ENCODE measurements at regions of chr18 and their contacts with region 1.

Region 1: DNA sequence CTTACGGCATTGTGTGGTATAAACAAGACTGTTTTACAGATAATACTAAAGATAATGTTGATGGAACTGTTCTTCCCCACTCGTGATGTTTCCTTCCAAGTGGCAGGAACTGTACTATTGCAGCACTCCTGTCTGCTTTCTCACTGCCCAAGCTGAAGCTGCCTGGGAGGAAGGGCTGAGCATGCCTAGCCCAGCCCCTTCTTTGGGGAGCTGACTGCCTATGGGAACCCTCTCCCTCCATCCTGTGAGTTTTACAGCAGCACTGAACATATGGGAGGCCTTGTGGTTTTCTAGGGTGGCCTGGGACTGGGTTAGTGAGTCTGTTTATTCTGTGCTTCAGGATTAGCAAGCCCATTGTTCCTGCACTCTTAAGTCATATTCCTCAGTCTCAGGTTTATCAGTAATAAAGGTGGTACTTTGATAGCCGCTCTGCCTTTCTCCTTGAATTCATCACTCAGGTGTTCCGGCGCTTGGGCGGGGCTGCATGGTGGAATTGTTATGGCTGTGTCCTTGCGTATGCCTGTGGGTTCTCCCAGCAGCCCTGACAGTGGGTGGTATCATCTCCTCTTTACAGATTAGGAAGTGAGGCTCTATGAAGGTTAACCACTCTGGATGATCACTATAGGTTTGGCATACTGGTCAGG is 379.7 kb downstream of the PTPRM start:
- DNase-seq: peak; percentile 76
- ATAC-seq: peak; percentile 55
- H3K4me3 ChIP-seq: peak overlapping the region; percentile 26
- H3K27ac ChIP-seq: peak overlapping the region; percentile 95
- H3K4me1 ChIP-seq: peaks cover 65% of the 10 kb centered on the region
- H3K27me3 ChIP-seq: no peaks in the 10 kb centered on the region
- CTCF ChIP-seq: no peak

Region 2: DNA sequence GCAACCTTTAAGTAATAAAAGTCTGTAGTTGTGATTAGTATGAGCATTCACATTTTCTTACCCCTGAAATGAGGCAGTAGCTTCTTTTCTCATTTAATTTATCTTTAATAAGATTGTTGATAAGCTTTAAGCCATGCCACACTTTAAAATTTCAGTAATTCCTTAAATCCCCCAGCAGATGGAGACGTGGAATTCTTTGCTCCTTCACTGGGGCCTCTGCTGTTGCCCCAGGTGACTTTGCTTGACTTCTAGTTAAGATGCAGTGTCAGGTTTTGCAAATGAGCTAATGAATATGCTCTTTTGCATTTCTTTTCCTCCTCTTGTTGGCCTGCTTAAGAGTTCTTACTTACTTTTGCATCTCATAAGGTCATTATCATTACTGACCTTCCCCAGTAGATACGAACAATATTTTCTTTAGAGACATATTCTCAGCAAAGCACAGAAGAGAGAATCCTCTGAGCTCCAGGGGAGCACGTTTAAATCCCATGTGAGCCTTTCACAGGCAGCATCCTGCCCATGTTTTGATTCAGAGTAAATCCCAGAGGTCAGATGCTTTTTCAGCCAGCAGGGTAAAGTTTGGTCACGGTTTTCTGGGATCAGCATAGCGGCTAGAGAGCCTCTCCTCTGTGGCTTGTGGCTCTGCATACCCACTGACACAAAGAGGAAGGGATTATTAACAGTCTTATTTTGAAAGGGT is 156.9 kb before region 1 on chr18:
- CTCF ChIA-PET with region 1: interaction called, 9 read pairs
- POLR2A ChIA-PET with region 1: no interaction called
- intact Hi-C with region 1: loop called (anchors 2 kb)
- DNase-seq: peak; percentile 65
- ATAC-seq: peak; percentile 90
- H3K4me3 ChIP-seq: no peak overlapping the region
- H3K27ac ChIP-seq: no peak overlapping the region
- H3K4me1 ChIP-seq: no peaks in the 10 kb centered on the region
- H3K27me3 ChIP-seq: no peaks in the 10 kb centered on the region
- CTCF ChIP-seq: peak; percentile 84

Region 3: DNA sequence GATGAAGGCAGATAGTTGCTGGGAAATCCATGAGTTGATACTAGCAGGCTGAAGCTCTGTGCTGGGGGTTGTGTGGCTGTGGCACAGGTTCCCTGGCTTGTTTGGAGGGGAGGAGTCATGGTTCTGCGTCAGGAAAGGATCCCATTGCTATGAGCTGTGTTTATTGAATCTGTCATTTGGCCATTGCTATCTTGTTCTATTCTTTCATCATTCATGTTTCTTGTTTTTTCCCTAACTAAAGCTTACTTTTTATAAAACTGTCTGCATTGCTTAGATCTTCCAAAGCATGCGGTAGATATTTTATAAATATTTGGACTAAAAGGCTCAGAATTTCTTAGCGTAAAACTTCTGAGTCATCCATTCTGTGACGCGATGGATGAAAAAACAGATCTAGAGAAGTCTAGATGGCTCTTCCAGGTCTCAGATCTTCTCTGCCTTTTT is 44.4 kb before region 1 on chr18:
- CTCF ChIA-PET with region 1: no interaction called
- POLR2A ChIA-PET with region 1: no interaction called
- intact Hi-C with region 1: loop called (anchors 2 kb)
- DNase-seq: no peak
- ATAC-seq: no peak
- H3K4me3 ChIP-seq: no peak overlapping the region
- H3K27ac ChIP-seq: peak overlapping the region; percentile 35
- H3K4me1 ChIP-seq: peaks cover 38% of the 10 kb centered on the region
- H3K27me3 ChIP-seq: no peaks in the 10 kb centered on the region
- CTCF ChIP-seq: no peak

Region 4: DNA sequence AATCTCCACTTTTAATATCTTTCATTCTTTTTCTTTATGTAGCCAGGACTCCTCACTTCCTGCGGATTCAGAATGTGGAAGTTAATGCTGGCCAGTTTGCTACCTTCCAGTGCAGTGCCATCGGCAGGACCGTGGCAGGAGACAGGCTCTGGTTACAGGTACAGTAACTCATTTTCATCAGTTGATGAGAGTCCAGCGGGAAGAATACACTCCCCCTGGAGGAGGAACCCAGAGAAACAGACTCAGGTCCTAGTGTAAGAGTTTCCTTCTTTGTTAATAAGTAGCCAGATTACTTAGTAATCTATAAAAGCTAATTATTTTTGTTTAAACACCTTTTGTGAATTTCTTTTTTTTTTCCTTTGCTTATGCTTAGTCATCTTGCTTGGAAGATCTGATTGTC is 20.3 kb before region 1 on chr18:
- CTCF ChIA-PET with region 1: no interaction called
- POLR2A ChIA-PET with region 1: no interaction called
- intact Hi-C with region 1: loop called (anchors 1 kb)
- DNase-seq: peak; percentile 48
- ATAC-seq: 0 out of 2 replicates have a peak, but pooled peaks have one; percentile 2
- H3K4me3 ChIP-seq: no peak overlapping the region
- H3K27ac ChIP-seq: no peak overlapping the region
- H3K4me1 ChIP-seq: peaks cover 34% of the 10 kb centered on the region
- H3K27me3 ChIP-seq: no peaks in the 10 kb centered on the region
- CTCF ChIP-seq: peak; percentile 59

Region 5: GRCh38 chr18:7974200-7974874 is 27.5 kb after region 1 on chr18:
- CTCF ChIA-PET with region 1: no interaction called
- POLR2A ChIA-PET with region 1: interaction called, 21 read pairs
- intact Hi-C with region 1: no loop called
- DNase-seq: no peak
- ATAC-seq: no peak
- H3K4me3 ChIP-seq: no peak overlapping the region
- H3K27ac ChIP-seq: no peak overlapping the region
- H3K4me1 ChIP-seq: no peaks in the 10 kb centered on the region
- H3K27me3 ChIP-seq: no peaks in the 10 kb centered on the region
- CTCF ChIP-seq: no peak

Region 6: GRCh38 chr18:8116346-8117005 is 169.6 kb after region 1 on chr18:
- CTCF ChIA-PET with region 1: no interaction called
- POLR2A ChIA-PET with region 1: no interaction called
- intact Hi-C with region 1: loop called (anchors 5 kb)
- DNase-seq: peak; percentile 93
- ATAC-seq: peak; percentile 99
- H3K4me3 ChIP-seq: peak overlapping the region; percentile 31; the same call in 1 of the 2 replicates
- H3K27ac ChIP-seq: peak overlapping the region; percentile 93
- H3K4me1 ChIP-seq: peaks cover 32% of the 10 kb centered on the region
- H3K27me3 ChIP-seq: no peaks in the 10 kb centered on the region
- CTCF ChIP-seq: no peak

Region 7: GRCh38 chr18:8375249-8375648 is 428.4 kb after region 1 on chr18:
- CTCF ChIA-PET with region 1: no interaction called
- POLR2A ChIA-PET with region 1: no interaction called
- intact Hi-C with region 1: loop called (anchors 10 kb)
- DNase-seq: peak; percentile 17
- ATAC-seq: peak; percentile 23
- H3K4me3 ChIP-seq: no peak overlapping the region
- H3K27ac ChIP-seq: no peak overlapping the region
- H3K4me1 ChIP-seq: no peaks in the 10 kb centered on the region
- H3K27me3 ChIP-seq: no peaks in the 10 kb centered on the region
- CTCF ChIP-seq: no peak

Measured in PC-3 (cell line).